Gastrocnemius medialis (tissue), 4 donors: ENCODE measurements at regions of chr16 and their contacts with region 1.

Region 1: GRCh38 chr16:16062023-16062932 is 112.9 kb downstream of the ABCC1 start:
- DNase-seq: peak; percentile 48 to 55
- ATAC-seq: peak in 1 of 2 donors; percentile 3
- H3K4me3 ChIP-seq: no peak overlapping the region
- H3K27ac ChIP-seq: peak overlapping the region; percentile 89 to 92 (median 90)
- H3K4me1 ChIP-seq: peaks cover 42 to 46% of the 10 kb centered on the region in 2 donors
- H3K27me3 ChIP-seq: no peaks in the 10 kb centered on the region
- CTCF ChIP-seq: peak in 2 of 5 experiments; percentile 19 to 21
- POLR2A ChIP-seq: no peak

Region 2: GRCh38 chr16:15607700-15608396 is 454.4 kb before region 1 on chr16:
- in situ Hi-C with region 1: no loop called
- intact Hi-C with region 1: no loop called
- DNase-seq: peak; percentile 94 to 97
- ATAC-seq: peak; percentile 87 to 91
- H3K4me3 ChIP-seq: no peak overlapping the region
- H3K27ac ChIP-seq: peak overlapping the region; percentile 81 to 92 (median 89)
- H3K4me1 ChIP-seq: peaks cover 53% of the 10 kb centered on the region in 2 donors
- H3K27me3 ChIP-seq: no peaks in the 10 kb centered on the region
- CTCF ChIP-seq: no peak
- POLR2A ChIP-seq: peak; percentile 40 to 67

Region 3: DNA sequence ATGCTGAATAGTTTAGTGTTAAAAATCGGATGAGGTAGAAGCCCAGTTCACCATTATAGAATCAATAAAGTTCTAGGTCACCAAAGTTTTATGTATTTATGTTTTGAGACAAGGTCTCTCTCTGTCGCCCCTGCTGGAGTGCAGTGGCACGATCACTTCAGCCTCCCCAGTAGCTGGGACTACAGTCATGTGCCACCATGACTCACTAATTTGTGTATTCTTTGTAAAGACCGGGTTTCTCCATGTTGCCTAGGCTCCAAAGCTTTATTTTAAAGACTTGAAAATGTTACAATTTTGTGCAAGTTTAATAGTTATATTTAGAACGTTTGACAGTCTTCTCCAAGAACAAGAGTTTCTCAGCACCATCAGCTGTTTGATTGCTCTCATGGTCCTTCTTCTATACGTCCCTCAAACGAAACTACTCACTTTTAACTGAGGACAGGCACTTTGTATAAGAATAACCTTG is 380.1 kb before region 1 on chr16:
- in situ Hi-C with region 1: no loop called
- intact Hi-C with region 1: no loop called
- DNase-seq: no peak
- ATAC-seq: no peak
- H3K4me3 ChIP-seq: no peak overlapping the region
- H3K27ac ChIP-seq: no peak overlapping the region
- H3K4me1 ChIP-seq: peaks cover 0 to 8% of the 10 kb centered on the region in 2 donors
- H3K27me3 ChIP-seq: no peaks in the 10 kb centered on the region
- CTCF ChIP-seq: no peak
- POLR2A ChIP-seq: no peak

Region 4: DNA sequence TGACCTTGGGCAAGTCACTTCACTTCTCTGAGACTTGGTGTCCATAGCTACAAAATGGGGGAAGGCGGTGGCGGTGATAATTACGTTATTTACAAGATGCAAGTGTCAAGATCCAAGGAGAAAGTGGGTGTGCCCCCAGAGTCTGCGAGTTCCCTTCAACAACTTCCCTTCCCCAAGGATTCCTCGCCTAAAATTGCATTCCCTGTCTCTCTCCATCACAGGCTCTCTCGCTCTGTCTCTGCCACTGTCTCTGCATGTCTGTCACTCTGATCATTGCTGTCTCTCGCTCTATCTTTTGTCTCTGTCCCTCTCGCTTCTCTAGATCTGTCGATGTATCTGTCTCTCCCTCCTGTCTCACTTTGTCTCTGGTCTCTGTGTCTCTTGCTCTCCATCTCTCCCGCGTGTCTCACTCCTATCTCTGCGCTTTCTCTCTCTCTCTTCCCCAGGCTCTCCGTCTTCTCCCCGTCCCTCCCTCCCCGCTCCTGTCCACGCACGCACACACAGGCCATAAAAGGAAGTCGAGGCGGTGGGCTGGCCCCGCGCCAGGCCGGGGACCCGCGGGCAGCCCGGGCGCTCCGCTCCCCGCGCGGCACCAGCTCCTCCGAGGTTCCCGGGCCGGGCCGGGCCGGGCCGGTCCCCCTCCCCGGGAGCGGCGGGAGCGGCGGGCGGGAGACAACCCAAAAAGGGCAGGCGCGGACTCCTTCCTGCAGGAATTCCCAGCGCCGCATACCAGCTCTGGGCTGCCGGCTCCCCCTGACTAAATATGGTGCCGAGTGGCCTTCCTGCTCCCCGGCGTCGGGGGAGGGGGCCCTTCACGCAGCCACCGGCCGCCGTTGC is 204.3 kb before region 1 on chr16:
- in situ Hi-C with region 1: no loop called
- intact Hi-C with region 1: no loop called
- DNase-seq: no peak
- ATAC-seq: no peak
- H3K4me3 ChIP-seq: peak overlapping the region; percentile 39 to 54 (median 50)
- H3K27ac ChIP-seq: peak overlapping the region in 2 of 4 donors; percentile 9 to 61
- H3K4me1 ChIP-seq: peaks cover 15 to 20% of the 10 kb centered on the region in 2 donors
- H3K27me3 ChIP-seq: peaks cover 14 to 22% (median 17%) of the 10 kb centered on the region in 3 donors
- CTCF ChIP-seq: no peak
- POLR2A ChIP-seq: no peak

Region 5: DNA sequence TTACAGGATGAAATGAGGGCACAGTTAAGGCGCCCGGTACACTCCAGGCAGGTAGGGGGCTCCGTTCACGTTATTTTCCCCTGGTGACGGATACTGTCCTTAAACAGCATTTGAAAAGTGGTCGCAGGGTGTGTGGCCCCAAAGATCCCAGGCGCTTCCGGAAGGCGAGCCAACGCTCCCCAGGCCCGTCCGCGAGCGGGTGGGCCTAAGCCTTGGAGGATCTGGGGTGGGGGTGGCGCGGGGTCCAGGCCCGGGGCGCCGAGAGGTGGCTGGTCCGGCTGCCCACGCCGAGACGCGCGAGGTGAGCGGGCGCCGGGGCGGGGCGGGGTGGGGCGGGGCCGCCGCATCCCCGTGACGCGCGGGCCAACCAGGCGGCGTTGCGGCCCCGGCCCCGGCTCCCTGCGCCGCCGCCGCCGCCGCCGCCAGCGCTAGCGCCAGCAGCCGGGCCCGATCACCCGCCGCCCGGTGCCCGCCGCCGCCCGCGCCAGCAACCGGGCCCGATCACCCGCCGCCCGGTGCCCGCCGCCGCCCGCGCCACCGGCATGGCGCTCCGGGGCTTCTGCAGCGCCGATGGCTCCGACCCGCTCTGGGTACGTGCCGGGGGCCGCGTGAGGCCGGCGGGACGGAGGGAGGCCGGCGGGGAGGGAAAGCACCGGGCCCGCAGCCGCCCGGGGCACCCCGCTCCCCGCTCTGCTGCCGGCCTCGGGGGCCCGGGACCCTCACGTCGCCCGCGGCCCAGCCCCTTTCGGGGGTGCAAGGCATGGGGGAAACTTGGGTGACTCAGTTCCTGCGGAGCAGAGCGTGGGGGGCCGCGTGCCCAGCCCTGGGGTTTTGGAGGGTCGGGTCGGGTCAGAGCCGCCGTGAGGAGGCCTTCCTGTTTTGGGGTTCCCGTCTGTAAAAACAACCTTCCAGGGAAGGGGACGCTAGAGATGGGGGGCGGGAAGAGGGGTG is 112.8 kb before region 1 on chr16 and contains the start of gene ABCC1:
- in situ Hi-C with region 1: loop called in 1 of 4 experiments (anchors 25 kb)
- intact Hi-C with region 1: loop called (anchors 5 kb)
- DNase-seq: peak in 1 of 2 donors; percentile 40
- ATAC-seq: peak; percentile 75 to 82
- H3K4me3 ChIP-seq: peak within 1 kb of the TSS; percentile 74 to 93 (median 86)
- H3K27ac ChIP-seq: peak within 1 kb of the TSS; percentile 91 to 94 (median 92)
- H3K4me1 ChIP-seq: peaks cover 29 to 32% of the 10 kb centered on the region in 2 donors
- H3K27me3 ChIP-seq: no peaks in the 10 kb centered on the region
- CTCF ChIP-seq: peak in 1 of 5 experiments; percentile 14
- POLR2A ChIP-seq: peak; percentile 41 to 51
- total RNA-seq, gene ABCC1: 19.3 to 43.7 (median 26.2) TPM

Region 6: GRCh38 chr16:15976929-15977637 is 85.2 kb before region 1 on chr16:
- in situ Hi-C with region 1: loop called in 1 of 4 experiments (anchors 25 kb)
- intact Hi-C with region 1: loop called (anchors 5 kb)
- DNase-seq: peak in 1 of 2 donors; percentile 56
- ATAC-seq: peak in 1 of 2 donors; percentile 14
- H3K4me3 ChIP-seq: no peak overlapping the region
- H3K27ac ChIP-seq: peak overlapping the region; percentile 89 to 92 (median 90)
- H3K4me1 ChIP-seq: peaks cover 57 to 67% of the 10 kb centered on the region in 2 donors
- H3K27me3 ChIP-seq: no peaks in the 10 kb centered on the region
- CTCF ChIP-seq: no peak
- POLR2A ChIP-seq: no peak

Region 7: DNA sequence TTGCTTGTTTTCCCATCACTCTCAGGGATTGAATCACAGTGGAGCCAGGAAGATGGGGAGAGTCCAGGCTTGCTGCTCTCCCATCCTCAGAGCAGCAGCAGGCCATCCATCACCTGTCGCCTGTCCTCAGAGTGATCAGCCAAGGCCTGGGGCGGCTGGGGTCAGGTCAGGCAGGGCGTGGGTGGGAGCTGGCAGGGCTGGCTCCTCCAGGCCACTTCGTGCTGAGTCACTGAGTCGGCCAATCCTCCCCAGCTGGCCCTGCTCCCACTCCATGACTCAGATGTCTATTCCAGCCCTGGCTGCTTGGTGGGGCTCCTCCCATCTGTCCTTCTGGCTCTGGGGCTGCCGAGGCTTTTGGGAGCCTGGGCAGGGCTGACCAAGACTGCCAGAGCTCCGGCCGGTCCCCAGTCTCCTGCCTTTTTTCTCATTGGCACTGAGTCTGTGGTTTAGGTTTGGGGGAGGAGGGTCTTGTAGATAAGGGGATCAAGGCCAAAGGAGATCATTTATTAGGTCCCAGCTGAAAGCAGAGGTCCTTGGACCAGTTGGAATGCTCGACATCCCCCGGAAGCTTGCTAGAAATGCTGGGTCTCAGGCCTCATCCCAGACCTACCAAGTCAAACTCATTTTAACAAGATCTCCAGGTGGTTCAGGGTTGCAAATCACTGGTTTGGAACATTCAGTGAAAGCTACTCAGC is 40.1 kb before region 1 on chr16:
- in situ Hi-C with region 1: no loop called
- intact Hi-C with region 1: loop called (anchors 1 kb)
- DNase-seq: peak; percentile 98 to 100
- ATAC-seq: peak; percentile 86 to 94
- H3K4me3 ChIP-seq: peak overlapping the region in 3 of 4 donors; percentile 8 to 38 (median 32)
- H3K27ac ChIP-seq: peak overlapping the region; percentile 81 to 95 (median 88)
- H3K4me1 ChIP-seq: peaks cover 22 to 64% of the 10 kb centered on the region in 2 donors
- H3K27me3 ChIP-seq: no peaks in the 10 kb centered on the region
- CTCF ChIP-seq: no peak
- POLR2A ChIP-seq: peak; percentile 46 to 52

Region 8: DNA sequence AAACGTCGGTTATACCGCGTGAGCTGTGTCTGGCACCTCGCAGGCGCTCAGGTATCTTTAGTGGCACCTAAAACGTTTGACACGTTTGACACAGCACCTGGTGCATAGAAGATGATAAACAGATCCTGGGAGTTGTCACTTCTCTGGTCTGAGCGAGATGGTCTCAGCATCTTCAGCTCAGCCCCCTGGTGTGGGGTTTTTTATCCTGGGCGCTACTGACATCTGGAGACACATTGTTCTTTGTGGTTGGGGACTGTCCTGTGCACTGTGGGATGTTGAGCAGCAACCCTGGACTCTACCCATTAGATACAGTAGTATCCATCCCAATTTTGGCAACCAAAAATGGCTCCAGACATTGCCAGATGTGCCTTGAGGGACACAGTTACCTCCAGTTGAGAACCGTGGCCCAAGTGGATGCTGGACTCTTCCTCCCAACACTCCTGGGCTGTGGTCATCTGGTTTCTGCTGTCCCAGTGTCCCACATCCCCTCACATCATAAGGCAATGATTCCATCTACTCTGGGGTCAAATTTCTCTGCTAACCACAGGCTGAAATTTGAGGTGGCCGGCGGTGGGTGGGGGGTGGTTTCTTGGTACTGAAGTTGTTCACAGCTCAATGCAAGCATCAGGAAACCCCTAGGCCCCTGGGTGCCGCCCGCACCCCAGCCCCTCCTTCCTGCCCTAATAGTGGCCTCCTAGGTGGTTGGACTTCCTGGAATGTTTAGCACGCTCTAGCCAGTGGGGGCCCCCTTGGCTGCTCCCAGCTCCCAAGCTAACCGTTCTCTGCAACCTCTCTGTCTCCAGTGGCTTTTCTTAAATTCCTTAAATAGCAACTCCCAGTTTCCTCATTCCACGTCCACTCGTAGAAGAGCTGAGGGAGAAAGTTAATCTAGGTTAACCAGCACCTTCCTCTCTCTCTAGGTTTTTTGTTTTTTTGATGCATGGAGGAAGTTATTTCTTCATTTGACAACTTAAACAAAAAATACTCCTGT is 11.9 kb after region 1 on chr16:
- in situ Hi-C with region 1: no loop called
- intact Hi-C with region 1: loop called (anchors 1 kb)
- DNase-seq: peak; percentile 50 to 62
- ATAC-seq: peak; percentile 38 to 65
- H3K4me3 ChIP-seq: no peak overlapping the region
- H3K27ac ChIP-seq: peak overlapping the region; percentile 78 to 92 (median 89)
- H3K4me1 ChIP-seq: peaks cover 45 to 53% of the 10 kb centered on the region in 2 donors
- H3K27me3 ChIP-seq: no peaks in the 10 kb centered on the region
- CTCF ChIP-seq: no peak
- POLR2A ChIP-seq: peak in 1 of 2 donors; percentile 57